Activated CD4-positive, alpha-beta T cell treated with anti-CD3 and anti-CD28 coated beads for 36 hours (primary cell): ENCODE measurements at regions of chr7 and their contacts with region 1.

Region 1: DNA sequence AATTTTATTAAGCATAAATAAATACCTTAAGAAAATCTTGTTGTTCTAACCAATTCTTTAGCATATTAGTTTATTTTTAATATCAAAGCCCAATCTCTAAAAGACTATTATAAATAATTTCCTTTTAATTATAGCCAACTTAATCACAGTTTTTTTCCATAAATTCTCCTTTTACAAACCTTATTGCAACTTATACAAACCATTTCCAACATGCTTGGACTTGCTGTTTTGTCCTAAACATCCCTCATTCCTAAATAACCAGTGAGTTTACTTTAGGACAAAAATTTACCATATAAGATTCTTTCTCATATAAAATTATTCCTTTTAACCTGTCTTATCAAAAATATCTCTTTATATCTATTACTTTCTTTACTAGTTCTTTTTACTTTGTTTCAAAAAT is 25.2 kb upstream of the LSM8 start:
- DNase-seq: no peak
- ATAC-seq: no peak
- H3K4me3 Mint-ChIP-seq: no peak overlapping the region
- H3K27ac Mint-ChIP-seq: no peak overlapping the region
- H3K4me1 Mint-ChIP-seq: no peaks in the 10 kb centered on the region
- H3K27me3 Mint-ChIP-seq: peaks cover 14% of the 10 kb centered on the region

Region 2: GRCh38 chr7:117908031-117908795 is 250.6 kb before region 1 on chr7:
- CTCF ChIA-PET with region 1: no interaction called
- POLR2A ChIA-PET with region 1: interaction called, 10 read pairs
- intact Hi-C with region 1: no loop called
- DNase-seq: no peak
- ATAC-seq: no peak
- H3K4me3 Mint-ChIP-seq: no peak overlapping the region
- H3K27ac Mint-ChIP-seq: no peak overlapping the region
- H3K4me1 Mint-ChIP-seq: no peaks in the 10 kb centered on the region
- H3K27me3 Mint-ChIP-seq: no peaks in the 10 kb centered on the region